ENCODE measurements at regions of chr18 and their contacts with region 1.

Region 1: GRCh38 chr18:36284671-36285295 is 12.7 kb upstream of the FHOD3 start:
- DNase-seq: peak; percentile 71
- H3K4me3 ChIP-seq: no peak overlapping the region
- H3K27ac ChIP-seq: no peak overlapping the region
- H3K4me1 ChIP-seq: no peaks in the 10 kb centered on the region
- H3K27me3 ChIP-seq: peaks cover 6 to 19% of the 10 kb centered on the region in 2 experiments
- CTCF ChIP-seq: peak; percentile 63 to 65
- POLR2A ChIP-seq: no peak

Region 2: DNA sequence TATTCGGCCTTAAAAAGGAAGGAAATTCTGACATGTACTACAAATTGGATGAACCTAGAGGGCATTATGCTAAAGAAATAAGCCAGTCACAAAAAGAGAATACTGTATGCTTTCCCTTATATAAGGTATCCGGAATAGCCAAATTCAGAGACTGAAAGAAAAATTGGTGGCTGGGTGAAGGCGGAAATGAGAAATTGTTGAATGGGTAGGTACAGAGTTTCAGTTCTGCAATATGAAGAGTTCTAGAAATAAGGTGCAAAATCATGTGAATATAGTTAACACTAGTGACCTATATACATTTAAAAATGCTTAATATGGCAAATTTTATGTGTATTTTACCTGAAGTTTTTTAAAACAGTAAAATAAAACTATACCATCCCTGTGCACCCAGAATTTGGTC is 269.2 kb before region 1 on chr18:
- CTCF ChIA-PET with region 1: interaction called, 109 read pairs
- POLR2A ChIA-PET with region 1: no interaction called
- dilution Hi-C with region 1: no loop called
- intact Hi-C with region 1: loop called (anchors 1 kb)
- DNase-seq: no peak
- H3K4me3 ChIP-seq: no peak overlapping the region
- H3K27ac ChIP-seq: no peak overlapping the region
- H3K4me1 ChIP-seq: no peaks in the 10 kb centered on the region
- H3K27me3 ChIP-seq: no peaks in the 10 kb centered on the region
- CTCF ChIP-seq: no peak
- POLR2A ChIP-seq: no peak

Region 3: DNA sequence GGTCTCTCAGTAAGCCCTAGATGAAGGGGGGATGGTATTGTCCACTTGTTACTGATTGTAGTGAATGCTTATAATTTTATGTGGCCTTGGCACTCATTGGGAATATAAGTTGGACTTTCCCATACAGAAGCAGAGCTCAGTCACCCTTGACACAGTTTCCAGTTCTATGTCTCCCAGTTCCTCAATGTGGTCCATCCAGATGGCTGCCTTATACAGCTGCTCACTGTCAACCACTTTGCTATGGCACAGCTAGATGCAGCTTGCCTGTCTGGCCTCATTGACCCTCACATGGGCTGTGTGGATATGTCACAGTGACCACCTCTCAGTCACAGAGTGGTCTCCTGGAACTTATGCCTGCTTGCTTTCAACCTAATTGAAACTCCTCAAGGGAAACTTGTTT is 177.3 kb before region 1 on chr18:
- CTCF ChIA-PET with region 1: interaction called, 21 read pairs
- POLR2A ChIA-PET with region 1: no interaction called
- dilution Hi-C with region 1: no loop called
- intact Hi-C with region 1: no loop called
- DNase-seq: no peak
- H3K4me3 ChIP-seq: no peak overlapping the region
- H3K27ac ChIP-seq: no peak overlapping the region
- H3K4me1 ChIP-seq: no peaks in the 10 kb centered on the region
- H3K27me3 ChIP-seq: peaks cover 0 to 4% of the 10 kb centered on the region in 2 experiments
- CTCF ChIP-seq: no peak
- POLR2A ChIP-seq: no peak

Region 4: DNA sequence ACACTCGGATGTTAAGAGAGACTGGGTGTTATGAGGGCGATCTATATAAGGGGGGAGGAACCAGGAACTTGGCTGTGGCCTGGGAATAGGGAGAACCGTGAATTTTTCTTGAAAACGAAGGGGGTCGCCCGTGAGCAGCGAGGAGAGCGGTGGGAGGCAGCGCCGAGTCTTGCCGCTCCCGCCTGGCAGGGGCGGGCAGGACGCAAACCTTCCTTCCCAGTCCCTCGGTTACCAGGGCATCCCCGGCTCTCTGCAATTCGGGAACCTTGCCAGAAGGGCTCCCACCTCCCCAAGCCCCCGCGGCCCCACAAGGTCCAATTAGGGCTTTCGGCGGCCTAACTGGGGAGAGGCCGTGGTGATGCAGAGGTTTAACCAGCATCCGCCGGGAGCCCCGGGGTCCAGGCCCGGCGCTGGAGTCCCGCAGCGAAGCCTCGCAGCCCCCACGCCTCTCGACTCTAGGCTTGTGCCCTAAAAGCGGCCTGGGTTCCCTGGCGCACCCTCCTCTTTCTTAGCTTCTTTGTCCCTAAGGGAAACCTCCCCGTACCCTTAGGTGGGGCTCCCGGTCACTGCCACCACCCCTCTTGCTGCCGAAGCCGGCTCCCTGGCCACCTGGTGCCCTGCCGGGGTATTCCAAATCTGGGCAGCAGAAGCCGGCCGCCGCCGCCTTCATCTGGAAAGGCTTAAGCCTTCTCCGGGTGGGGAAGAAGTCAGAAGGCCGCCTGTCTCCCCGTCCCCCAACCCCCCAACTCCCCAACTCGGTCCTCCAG is 12.1 kb after region 1 on chr18:
- CTCF ChIA-PET with region 1: interaction called, 25 read pairs
- POLR2A ChIA-PET with region 1: no interaction called
- dilution Hi-C with region 1: no loop called
- intact Hi-C with region 1: no loop called
- DNase-seq: peak; percentile 68
- H3K4me3 ChIP-seq: peak overlapping the region in 2 of 3 experiments; percentile 28 to 34
- H3K27ac ChIP-seq: no peak overlapping the region
- H3K4me1 ChIP-seq: peaks cover 10% of the 10 kb centered on the region
- H3K27me3 ChIP-seq: peaks cover 39 to 52% of the 10 kb centered on the region in 2 experiments
- CTCF ChIP-seq: peak; percentile 35 to 50
- POLR2A ChIP-seq: no peak